Naive thymus-derived CD4-positive, alpha-beta T cell (primary cell): ENCODE measurements at regions of chr4 and their contacts with region 1.

Region 1: GRCh38 chr4:122703868-122704267 is 28.6 kb upstream of the BBS12 start:
- DNase-seq: no peak
- ATAC-seq: no peak
- H3K4me3 ChIP-seq: no peak overlapping the region
- H3K4me3 Mint-ChIP-seq: no peak overlapping the region
- H3K27ac ChIP-seq: no peak overlapping the region
- H3K27ac Mint-ChIP-seq: no peak overlapping the region
- H3K4me1 ChIP-seq: no peaks in the 10 kb centered on the region
- H3K4me1 Mint-ChIP-seq: peaks cover 0 to 63% (median 5%) of the 10 kb centered on the region in 7 donors
- H3K27me3 ChIP-seq: no peaks in the 10 kb centered on the region
- H3K27me3 Mint-ChIP-seq: peaks cover 0 to 4% (median 0%) of the 10 kb centered on the region in 5 donors

Region 2: DNA sequence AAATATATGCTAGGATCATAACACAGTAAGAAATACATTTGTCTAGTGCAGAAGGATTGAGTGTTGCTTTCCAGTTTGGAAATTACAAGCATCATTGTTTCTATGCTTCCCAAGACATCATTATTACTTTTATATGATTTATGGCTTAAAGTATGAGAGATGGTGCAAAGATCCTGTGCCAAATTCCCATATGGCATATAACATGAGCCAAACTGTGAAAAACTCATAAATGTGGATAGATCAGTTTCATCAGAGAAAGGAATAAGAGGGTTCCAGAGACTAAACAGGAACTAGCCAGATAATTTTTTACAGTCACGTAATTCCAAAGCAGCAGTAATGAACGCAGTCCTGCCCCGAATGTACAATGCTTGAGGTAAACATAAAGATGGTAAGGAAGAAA is 1907.6 kb before region 1 on chr4:
- CTCF ChIA-PET with region 1: no interaction called
- POLR2A ChIA-PET with region 1: no interaction called
- intact Hi-C with region 1: no loop called
- DNase-seq: no peak
- ATAC-seq: no peak
- H3K4me3 ChIP-seq: no peak overlapping the region
- H3K4me3 Mint-ChIP-seq: no peak overlapping the region
- H3K27ac ChIP-seq: no peak overlapping the region
- H3K27ac Mint-ChIP-seq: no peak overlapping the region
- H3K4me1 ChIP-seq: peaks cover 0 to 7% of the 10 kb centered on the region in 2 donors
- H3K4me1 Mint-ChIP-seq: peaks cover 6 to 11% (median 9%) of the 10 kb centered on the region in 7 donors
- H3K27me3 ChIP-seq: no peaks in the 10 kb centered on the region
- H3K27me3 Mint-ChIP-seq: no peaks in the 10 kb centered on the region

Region 3: DNA sequence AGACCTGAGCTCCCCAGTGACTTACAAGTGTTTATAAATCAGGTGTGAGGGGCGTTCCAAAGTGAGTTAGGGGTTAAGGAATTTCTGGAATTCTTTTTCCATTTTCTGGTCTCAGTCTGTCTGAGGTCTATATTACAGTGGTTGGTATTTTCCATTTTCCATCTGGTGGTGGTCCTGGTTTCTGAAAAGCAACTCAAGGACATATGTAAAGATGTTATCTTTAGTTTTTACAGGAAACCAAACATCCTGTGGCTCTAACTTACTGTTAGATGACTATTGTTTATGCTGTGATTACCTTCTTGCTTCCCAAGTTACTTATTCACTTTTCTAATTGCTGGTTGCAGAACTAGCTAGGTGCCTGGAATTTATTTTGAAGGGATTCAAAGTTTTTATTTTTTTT is 29.5 kb before region 1 on chr4:
- CTCF ChIA-PET with region 1: no interaction called
- POLR2A ChIA-PET with region 1: no interaction called
- intact Hi-C with region 1: loop called in 1 of 2 experiments (anchors 1 kb)
- DNase-seq: no peak
- ATAC-seq: no peak
- H3K4me3 ChIP-seq: no peak overlapping the region
- H3K4me3 Mint-ChIP-seq: peak overlapping the region in 1 of 10 donors; percentile 45
- H3K27ac ChIP-seq: no peak overlapping the region
- H3K27ac Mint-ChIP-seq: peak overlapping the region in 1 of 9 donors; percentile 71
- H3K4me1 ChIP-seq: no peaks in the 10 kb centered on the region
- H3K4me1 Mint-ChIP-seq: peaks cover 0 to 46% (median 6%) of the 10 kb centered on the region in 7 donors
- H3K27me3 ChIP-seq: no peaks in the 10 kb centered on the region
- H3K27me3 Mint-ChIP-seq: peaks cover 0 to 21% (median 2%) of the 10 kb centered on the region in 5 donors